ENCODE measurements at regions of chr15 and their contacts with region 1.

Region 1: GRCh38 chr15:43903864-43904290 is 77.1 kb downstream of the WDR76 start:
- DNase-seq: peak in 2 of 3 donors; percentile 24 to 63
- ATAC-seq: peak; percentile 74 to 82
- H3K4me3 ChIP-seq: no peak overlapping the region
- H3K27ac ChIP-seq: no peak overlapping the region
- H3K4me1 ChIP-seq: peaks cover 6% of the 10 kb centered on the region
- H3K27me3 ChIP-seq: no peaks in the 10 kb centered on the region

Region 2: GRCh38 chr15:44066316-44066740 is 162.5 kb after region 1 on chr15:
- intact Hi-C with region 1: loop called (anchors 5 to 10 kb)
- DNase-seq: peak in 1 of 3 donors; percentile 18
- ATAC-seq: peak in 1 of 2 donors; percentile 58
- H3K4me3 ChIP-seq: no peak overlapping the region
- H3K27ac ChIP-seq: no peak overlapping the region
- H3K4me1 ChIP-seq: no peaks in the 10 kb centered on the region
- H3K27me3 ChIP-seq: no peaks in the 10 kb centered on the region

Region 3: GRCh38 chr15:44215594-44215993 is 311.7 kb after region 1 on chr15:
- intact Hi-C with region 1: loop called in 3 of 4 experiments (anchors 10 kb)
- DNase-seq: no peak
- ATAC-seq: no peak
- H3K4me3 ChIP-seq: no peak overlapping the region
- H3K27ac ChIP-seq: no peak overlapping the region
- H3K4me1 ChIP-seq: no peaks in the 10 kb centered on the region
- H3K27me3 ChIP-seq: no peaks in the 10 kb centered on the region